Naive thymus-derived CD4-positive, alpha-beta T cell (primary cell): ENCODE measurements at regions of chr13 and their contacts with region 1.

Region 1: DNA sequence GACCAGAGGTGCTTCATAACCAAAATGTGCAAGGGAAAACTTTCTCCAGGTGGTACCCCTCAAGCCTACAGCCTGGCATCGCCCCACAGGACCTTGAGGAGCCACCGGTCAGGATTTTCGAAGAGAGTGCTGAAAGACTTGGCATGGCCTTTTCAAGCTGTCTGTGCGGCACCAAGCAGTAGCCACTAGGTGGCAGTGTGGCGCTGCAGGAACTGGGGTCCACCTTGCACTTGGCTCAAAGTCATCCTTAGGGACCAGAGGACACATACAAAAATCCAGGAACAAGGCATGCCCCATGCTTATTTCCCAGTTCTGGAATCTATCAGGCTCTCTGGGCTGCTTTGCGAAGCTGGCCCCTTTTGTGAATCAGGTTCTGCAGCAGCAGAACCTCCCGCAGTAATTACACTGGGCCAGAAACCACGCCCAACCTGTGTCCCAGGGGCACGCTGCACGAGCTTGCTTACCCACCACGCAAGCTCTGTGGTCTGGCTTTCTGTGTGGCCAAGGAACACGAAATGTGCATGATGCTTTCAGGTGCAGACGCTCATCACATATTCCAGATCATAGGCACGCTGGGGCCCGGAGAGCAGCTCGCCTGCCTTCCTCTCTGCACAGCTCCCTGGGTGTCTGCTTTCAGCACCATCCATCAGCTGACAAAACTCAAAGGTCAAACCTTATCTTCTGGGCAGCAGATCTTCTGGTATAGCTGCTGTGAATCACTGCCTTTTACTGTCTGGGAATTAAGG is 87.2 kb downstream of the SLC7A1 start:
- DNase-seq: peak; percentile 32 to 74 (median 61)
- ATAC-seq: peak; percentile 76
- H3K4me3 ChIP-seq: no peak overlapping the region
- H3K4me3 Mint-ChIP-seq: no peak overlapping the region
- H3K27ac ChIP-seq: no peak overlapping the region
- H3K27ac Mint-ChIP-seq: peak overlapping the region in 1 of 9 donors; percentile 21
- H3K4me1 ChIP-seq: no peaks in the 10 kb centered on the region
- H3K4me1 Mint-ChIP-seq: peaks cover 0 to 2% (median under 1%) of the 10 kb centered on the region in 7 donors
- H3K27me3 ChIP-seq: no peaks in the 10 kb centered on the region
- H3K27me3 Mint-ChIP-seq: peaks cover 3 to 6% (median 5%) of the 10 kb centered on the region in 5 donors

Region 2: GRCh38 chr13:27712421-27712820 is 1795.9 kb before region 1 on chr13:
- CTCF ChIA-PET with region 1: no interaction called
- POLR2A ChIA-PET with region 1: no interaction called
- intact Hi-C with region 1: no loop called
- DNase-seq: peak in 3 of 9 donors; percentile 24 to 29 (median 28)
- ATAC-seq: no peak
- H3K4me3 ChIP-seq: no peak overlapping the region
- H3K4me3 Mint-ChIP-seq: no peak overlapping the region
- H3K27ac ChIP-seq: no peak overlapping the region
- H3K27ac Mint-ChIP-seq: no peak overlapping the region
- H3K4me1 ChIP-seq: no peaks in the 10 kb centered on the region
- H3K4me1 Mint-ChIP-seq: no peaks in the 10 kb centered on the region
- H3K27me3 ChIP-seq: no peaks in the 10 kb centered on the region
- H3K27me3 Mint-ChIP-seq: peaks cover 13 to 29% (median 16%) of the 10 kb centered on the region in 5 donors

Region 3: DNA sequence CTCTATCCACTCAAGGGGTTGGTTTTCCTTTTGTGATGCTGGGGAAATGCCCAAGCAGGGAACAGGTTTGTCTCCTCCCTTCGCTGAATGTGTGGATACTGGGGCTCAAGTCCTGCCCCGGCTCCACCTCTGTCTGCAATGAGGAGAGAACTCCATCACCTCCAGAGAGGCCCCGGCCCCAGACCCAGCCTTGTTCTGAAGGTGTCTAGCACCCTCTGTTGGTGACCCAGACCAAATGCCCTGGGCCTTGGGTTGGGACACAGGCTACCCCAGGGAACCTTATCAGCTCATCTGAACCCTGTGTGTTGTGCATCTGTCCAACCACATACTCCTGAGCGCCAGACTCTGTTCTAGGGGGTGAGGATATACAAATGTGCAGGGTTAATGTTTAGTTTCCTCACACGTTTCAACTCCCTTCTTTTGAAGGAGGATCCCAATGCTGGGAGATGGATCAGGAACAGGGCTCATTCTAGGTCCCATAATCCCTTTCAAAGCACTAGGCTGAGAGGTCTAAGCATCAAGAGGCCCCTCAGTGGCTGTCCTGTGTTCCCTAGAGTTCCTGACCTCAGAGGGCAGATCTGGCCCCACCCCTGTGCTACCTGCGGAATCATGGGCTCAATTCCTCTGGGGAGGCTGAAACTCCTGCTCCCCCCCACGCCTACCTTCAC is 199.7 kb after region 1 on chr13:
- CTCF ChIA-PET with region 1: interaction called, 5 read pairs
- POLR2A ChIA-PET with region 1: no interaction called
- intact Hi-C with region 1: loop called (anchors 1 kb)
- DNase-seq: peak in 7 of 9 donors; percentile 8 to 49 (median 31)
- ATAC-seq: peak; percentile 61
- H3K4me3 ChIP-seq: no peak overlapping the region
- H3K4me3 Mint-ChIP-seq: no peak overlapping the region
- H3K27ac ChIP-seq: no peak overlapping the region
- H3K27ac Mint-ChIP-seq: no peak overlapping the region
- H3K4me1 ChIP-seq: no peaks in the 10 kb centered on the region
- H3K4me1 Mint-ChIP-seq: peaks cover 0 to 3% (median 0%) of the 10 kb centered on the region in 7 donors
- H3K27me3 ChIP-seq: no peaks in the 10 kb centered on the region
- H3K27me3 Mint-ChIP-seq: peaks cover 10 to 26% (median 12%) of the 10 kb centered on the region in 5 donors

Region 4: DNA sequence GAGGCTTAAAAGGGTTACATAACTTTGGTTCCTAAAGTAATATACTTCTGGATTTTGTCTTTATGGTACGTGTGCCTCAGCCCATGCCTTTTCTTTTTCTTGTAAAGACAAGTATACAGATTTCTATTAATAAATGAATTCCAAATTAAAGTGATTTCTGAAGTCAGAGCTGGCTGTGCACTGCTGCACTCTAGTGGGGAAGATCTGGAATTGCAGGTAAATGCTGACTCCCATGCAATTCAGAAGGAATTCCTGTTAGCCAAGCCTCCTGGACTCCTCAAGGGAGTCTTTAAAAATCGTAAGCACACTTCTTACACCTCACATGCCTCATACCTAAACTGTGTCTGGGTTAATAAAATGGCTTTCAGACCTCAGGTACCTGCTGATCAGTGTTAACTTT is 205.5 kb after region 1 on chr13:
- CTCF ChIA-PET with region 1: interaction called, 8 read pairs
- POLR2A ChIA-PET with region 1: no interaction called
- intact Hi-C with region 1: loop called (anchors 1 kb)
- DNase-seq: peak in 1 of 9 donors; percentile 4
- ATAC-seq: no peak
- H3K4me3 ChIP-seq: no peak overlapping the region
- H3K4me3 Mint-ChIP-seq: no peak overlapping the region
- H3K27ac ChIP-seq: no peak overlapping the region
- H3K27ac Mint-ChIP-seq: no peak overlapping the region
- H3K4me1 ChIP-seq: no peaks in the 10 kb centered on the region
- H3K4me1 Mint-ChIP-seq: no peaks in the 10 kb centered on the region
- H3K27me3 ChIP-seq: no peaks in the 10 kb centered on the region
- H3K27me3 Mint-ChIP-seq: peaks cover 3 to 20% (median 5%) of the 10 kb centered on the region in 5 donors

Region 5: GRCh38 chr13:29771247-29771646 is 262.9 kb after region 1 on chr13:
- CTCF ChIA-PET with region 1: interaction called, 7 read pairs
- POLR2A ChIA-PET with region 1: no interaction called
- intact Hi-C with region 1: loop called in 1 of 2 experiments (anchors 2 kb)
- DNase-seq: peak in 7 of 9 donors; percentile 31 to 67 (median 52)
- ATAC-seq: peak; percentile 77
- H3K4me3 ChIP-seq: no peak overlapping the region
- H3K4me3 Mint-ChIP-seq: no peak overlapping the region
- H3K27ac ChIP-seq: no peak overlapping the region
- H3K27ac Mint-ChIP-seq: peak overlapping the region in 1 of 9 donors; percentile 11
- H3K4me1 ChIP-seq: no peaks in the 10 kb centered on the region
- H3K4me1 Mint-ChIP-seq: peaks cover 0 to 14% (median 4%) of the 10 kb centered on the region in 7 donors
- H3K27me3 ChIP-seq: no peaks in the 10 kb centered on the region
- H3K27me3 Mint-ChIP-seq: no peaks in the 10 kb centered on the region